Activated T-helper 1 cell treated with anti-CD3 and anti-CD28 coated beads, Interleukin-12 subunit alpha, Interleukin-12 subunit beta, Interleukin-2, Interleukin-4 antibody, amounts not matched to agents 30 ng/mL and 10 ng/mL and 1 ng/mL, durations not matched to agents 14 hours and 24 hours and 36 hours (primary cell): ENCODE measurements at regions of chr12 and their contacts with region 1.

Region 1: DNA sequence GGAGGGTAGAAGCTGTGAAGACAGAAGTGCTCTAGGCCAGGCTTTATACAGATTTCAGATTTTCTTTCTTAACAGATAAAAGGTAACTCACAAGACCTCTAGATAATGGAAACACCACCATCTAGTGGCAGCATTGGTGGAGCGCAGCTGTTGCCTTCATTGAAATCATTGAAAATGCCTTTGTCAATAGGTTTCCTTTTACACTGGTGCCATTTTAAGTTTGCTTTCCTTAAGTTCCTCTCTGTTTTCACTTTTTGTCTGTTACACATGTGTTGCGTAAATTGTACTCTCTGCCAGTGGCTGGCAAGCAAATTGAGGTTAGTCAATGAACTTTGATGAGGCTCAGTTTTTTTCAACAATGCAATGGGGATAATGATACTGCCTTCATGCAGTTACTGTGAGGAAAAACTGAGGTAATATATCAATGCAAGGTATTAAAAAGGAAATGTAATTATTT is 31.1 kb downstream of the ALDH1L2 start:
- DNase-seq: peak; percentile 67
- H3K4me3 Mint-ChIP-seq: no peak overlapping the region
- H3K27ac Mint-ChIP-seq: peak overlapping the region; percentile 25
- H3K4me1 Mint-ChIP-seq: peaks cover 15% of the 10 kb centered on the region
- H3K27me3 Mint-ChIP-seq: no peaks in the 10 kb centered on the region

Region 2: DNA sequence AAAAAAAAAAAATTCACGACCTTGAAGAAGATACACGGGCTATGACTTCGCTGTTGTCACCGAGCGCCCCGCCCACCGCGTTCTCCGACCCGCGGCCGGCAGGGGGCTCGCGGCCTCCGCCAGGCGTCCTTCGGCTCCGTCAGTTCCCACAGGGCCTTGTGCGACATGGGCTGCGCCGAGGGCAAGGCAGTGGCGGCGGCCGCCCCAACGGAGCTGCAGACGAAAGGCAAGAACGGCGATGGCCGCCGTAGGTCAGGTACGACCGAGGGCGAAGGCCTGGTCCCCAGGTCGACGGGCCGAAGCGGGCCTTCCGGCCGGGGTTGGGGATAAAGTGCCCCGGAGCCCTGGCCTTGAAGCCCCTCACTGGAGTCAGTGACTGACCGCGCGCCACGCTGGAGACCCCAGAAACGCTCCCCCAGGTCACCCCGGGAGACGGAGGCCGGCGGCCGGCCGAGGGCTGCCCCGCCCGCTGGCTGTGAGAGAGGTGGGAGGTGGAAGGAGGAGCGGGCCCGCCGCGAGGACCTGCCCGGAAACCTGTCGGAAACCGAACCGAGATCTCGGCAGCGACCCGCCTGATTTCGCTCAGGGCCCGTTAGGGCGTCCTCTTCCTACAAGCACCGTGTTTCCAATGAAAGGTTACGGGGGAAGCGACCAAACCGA is 837.4 kb before region 1 on chr12 and contains the start of gene TXNRD1:
- intact Hi-C with region 1: loop called (anchors 1 kb)
- DNase-seq: peak; percentile 79
- H3K4me3 Mint-ChIP-seq: peak within 1 kb of the TSS; percentile 82
- H3K27ac Mint-ChIP-seq: peak within 1 kb of the TSS; percentile 55
- H3K4me1 Mint-ChIP-seq: peaks cover 44% of the 10 kb centered on the region
- H3K27me3 Mint-ChIP-seq: peaks cover 6% of the 10 kb centered on the region
- total RNA-seq, gene TXNRD1: 93.3 and 103 TPM in 2 replicates

Region 3: DNA sequence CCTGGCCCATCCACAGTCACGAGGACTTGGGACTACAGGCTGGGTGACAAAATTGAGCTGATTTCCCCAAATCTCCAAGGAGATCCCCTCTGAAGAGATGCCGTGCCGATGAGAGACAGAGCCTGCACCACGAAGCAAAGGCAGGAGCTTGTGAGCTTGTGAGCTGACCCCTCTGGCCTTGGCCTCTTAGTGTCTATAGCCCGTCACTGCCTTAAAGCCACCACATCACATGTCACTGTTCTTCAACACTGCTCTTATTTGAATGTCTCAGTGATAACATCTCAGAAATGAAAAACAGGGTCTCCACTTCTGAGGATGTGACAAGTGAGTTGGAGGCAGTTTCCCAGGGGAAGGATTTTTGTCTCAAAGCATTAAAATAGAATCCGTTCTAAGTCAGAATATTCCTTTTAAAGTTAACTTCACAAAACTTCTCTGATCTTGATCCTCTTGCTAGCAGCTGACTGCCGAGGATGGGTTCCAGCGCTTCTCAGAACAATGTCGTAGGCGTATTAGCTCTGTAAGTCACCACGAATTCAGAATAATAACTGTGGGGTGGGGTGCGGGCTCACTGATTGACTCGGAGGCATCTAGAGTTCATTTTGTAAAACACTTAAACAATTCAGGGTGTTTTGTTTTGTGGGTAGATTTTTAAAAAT is 558.9 kb before region 1 on chr12:
- intact Hi-C with region 1: loop called (anchors 10 kb)
- DNase-seq: no peak
- H3K4me3 Mint-ChIP-seq: peak overlapping the region; percentile 64
- H3K27ac Mint-ChIP-seq: peak overlapping the region; percentile 89
- H3K4me1 Mint-ChIP-seq: peaks cover 92% of the 10 kb centered on the region
- H3K27me3 Mint-ChIP-seq: no peaks in the 10 kb centered on the region

Region 4: GRCh38 chr12:104695453-104696148 is 357.5 kb before region 1 on chr12:
- intact Hi-C with region 1: no loop called
- DNase-seq: peak; percentile 70
- H3K4me3 Mint-ChIP-seq: peak overlapping the region; percentile 53
- H3K27ac Mint-ChIP-seq: peak overlapping the region; percentile 94
- H3K4me1 Mint-ChIP-seq: peaks cover 84% of the 10 kb centered on the region
- H3K27me3 Mint-ChIP-seq: no peaks in the 10 kb centered on the region

Region 5: GRCh38 chr12:104733717-104734175 is 319.4 kb before region 1 on chr12:
- intact Hi-C with region 1: loop called (anchors 1 kb)
- DNase-seq: peak; percentile 34
- H3K4me3 Mint-ChIP-seq: no peak overlapping the region
- H3K27ac Mint-ChIP-seq: no peak overlapping the region
- H3K4me1 Mint-ChIP-seq: peaks cover 75% of the 10 kb centered on the region
- H3K27me3 Mint-ChIP-seq: no peaks in the 10 kb centered on the region

Region 6: DNA sequence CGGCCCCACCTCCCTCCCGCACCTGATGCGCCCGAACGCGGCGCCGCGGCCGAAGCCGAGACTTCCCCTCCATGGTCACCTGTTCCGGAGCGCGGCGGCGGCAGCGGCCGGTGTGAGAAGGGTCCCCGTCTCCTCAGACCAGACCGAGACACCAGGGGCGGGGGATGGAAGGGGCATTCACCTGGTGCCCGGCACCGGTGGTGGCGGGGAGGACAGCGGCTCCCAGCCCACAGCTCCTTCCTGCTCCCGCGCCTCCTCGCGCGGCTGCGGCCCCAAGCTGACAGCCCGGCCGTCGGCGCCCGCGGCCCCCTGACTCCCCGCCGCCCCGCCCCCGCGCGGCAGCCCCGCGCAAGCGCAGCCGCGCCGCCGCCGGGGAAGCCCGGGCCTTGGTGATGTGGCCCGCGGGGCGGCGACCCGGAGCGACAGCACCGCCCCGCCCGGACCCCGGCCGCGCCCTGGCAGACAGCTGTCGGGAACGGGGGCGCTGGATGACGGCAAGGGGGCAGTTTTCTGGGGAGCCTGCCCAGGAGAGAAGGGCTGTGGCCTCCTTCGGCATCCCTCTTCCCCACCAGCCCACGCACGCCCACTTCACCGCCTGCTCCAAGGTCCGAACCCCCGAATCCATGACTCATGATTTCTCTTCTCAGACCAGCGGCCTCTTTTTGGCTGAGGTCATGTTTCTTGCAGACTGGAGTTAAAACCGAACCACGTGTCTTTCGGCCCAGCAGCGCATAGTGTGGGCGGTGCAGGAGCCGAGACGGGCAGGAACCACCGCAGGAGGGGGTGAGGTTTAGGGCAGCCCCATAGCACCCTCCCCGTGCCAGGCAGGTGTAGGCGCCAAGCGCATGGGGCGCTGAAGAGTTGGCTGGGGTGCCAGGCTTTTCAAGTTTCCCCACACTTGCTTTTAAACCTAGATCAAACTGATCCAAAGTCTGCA is 94.9 kb before region 1 on chr12 and contains the start of gene SLC41A2:
- intact Hi-C with region 1: loop called (anchors 1 kb)
- DNase-seq: peak; percentile 80
- H3K4me3 Mint-ChIP-seq: peak within 1 kb of the TSS; percentile 90
- H3K27ac Mint-ChIP-seq: peak within 1 kb of the TSS; percentile 96
- H3K4me1 Mint-ChIP-seq: peaks cover 44% of the 10 kb centered on the region
- H3K27me3 Mint-ChIP-seq: peaks cover 24% of the 10 kb centered on the region
- total RNA-seq, gene SLC41A2: 16.4 and 19.0 TPM in 2 replicates